ENCODE measurements at regions of chr4 and their contacts with region 1.

Region 1: GRCh38 chr4:177047070-177047850 is 254.5 kb upstream of the VEGFC start:
- DNase-seq: peak; percentile 18 to 86 (median 72)

Region 2: GRCh38 chr4:176377780-176378179 is 669.5 kb before region 1 on chr4:
- intact Hi-C with region 1: loop called (anchors 10 kb)
- DNase-seq: no peak

Region 3: GRCh38 chr4:176939445-176939844 is 107.8 kb before region 1 on chr4:
- intact Hi-C with region 1: no loop called
- DNase-seq: no peak